Spleen (tissue), 13 donors: ENCODE measurements at regions of chr21 and their contacts with region 1.

Region 1: DNA sequence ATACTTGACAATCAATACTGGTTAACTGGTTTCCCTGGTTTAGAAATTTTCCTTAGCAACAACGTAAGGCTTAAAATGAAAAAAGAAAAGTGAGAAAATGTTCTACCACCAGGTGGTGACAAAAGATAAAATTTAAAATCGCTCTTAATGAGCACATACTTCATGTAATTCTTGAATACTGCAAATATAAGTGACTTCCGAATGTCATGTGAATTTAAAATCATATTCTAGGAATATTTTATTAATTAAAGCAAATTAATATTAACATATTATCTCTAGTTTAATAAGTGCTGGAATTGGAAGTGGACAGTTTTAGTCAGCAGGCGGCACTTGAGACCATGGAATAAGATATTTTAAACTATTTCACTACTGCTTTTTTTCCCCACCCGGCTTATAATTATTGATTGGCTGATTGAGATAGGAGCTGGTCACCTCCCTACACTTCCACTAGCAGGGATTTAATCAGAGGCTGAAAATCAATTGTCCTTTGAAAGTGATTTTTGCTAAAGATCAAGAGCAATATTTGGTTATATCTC is 5.0 kb upstream of the ADAMTS1 start:
- DNase-seq: no peak
- H3K4me3 ChIP-seq: no peak overlapping the region
- H3K27ac ChIP-seq: no peak overlapping the region
- H3K4me1 ChIP-seq: peaks cover 0 to 35% (median 25%) of the 10 kb centered on the region in 6 donors
- H3K27me3 ChIP-seq: peaks cover 0 to 40% (median 13%) of the 10 kb centered on the region in 7 donors
- CTCF ChIP-seq: peak in 10 of 11 experiments; percentile 33 to 74 (median 49)
- POLR2A ChIP-seq: no peak

Region 2: GRCh38 chr21:27700974-27701614 is 850.9 kb after region 1 on chr21:
- intact Hi-C with region 1: loop called (anchors 2 kb)
- DNase-seq: peak; percentile 82
- H3K4me3 ChIP-seq: no peak overlapping the region
- H3K27ac ChIP-seq: no peak overlapping the region
- H3K4me1 ChIP-seq: peaks cover 0 to 9% (median 5%) of the 10 kb centered on the region in 6 donors
- H3K27me3 ChIP-seq: no peaks in the 10 kb centered on the region
- CTCF ChIP-seq: peak in 10 of 11 experiments; percentile 42 to 84 (median 70)
- POLR2A ChIP-seq: no peak